ENCODE measurements at regions of chr6 and their contacts with region 1.

Region 1: DNA sequence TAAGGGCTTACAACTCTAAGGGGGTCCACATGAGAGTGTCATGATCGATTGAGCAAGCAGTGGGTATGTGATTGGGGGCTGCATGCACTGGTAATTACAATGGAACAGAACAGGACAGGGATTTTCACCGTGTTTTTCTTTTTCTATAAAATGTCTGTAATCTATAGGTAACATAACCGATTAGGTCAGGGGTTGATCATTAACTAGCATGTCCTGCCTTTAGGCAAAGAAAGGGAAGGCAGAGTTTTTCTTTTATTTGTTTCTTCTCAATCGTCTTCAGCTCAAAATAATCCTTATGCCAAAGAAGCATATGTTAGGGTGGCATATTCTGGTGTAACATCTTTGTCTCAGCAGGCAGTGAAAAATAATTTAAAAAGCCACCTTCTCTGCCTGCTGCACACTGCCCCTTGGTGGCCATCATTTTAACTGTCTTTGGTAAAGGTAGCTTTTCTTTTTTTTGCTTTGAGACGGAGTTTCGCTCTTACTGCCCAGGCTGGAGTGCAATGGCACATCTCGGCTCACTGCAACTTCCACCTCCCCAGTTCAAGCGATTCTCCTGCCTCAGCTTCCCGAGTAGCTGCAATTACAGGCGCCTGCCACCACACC is 9.7 kb upstream of the CEP43 start:
- DNase-seq: peak; percentile 22
- ATAC-seq: peak; percentile 99
- H3K4me3 Mint-ChIP-seq: no peak overlapping the region
- H3K27ac Mint-ChIP-seq: no peak overlapping the region
- H3K4me1 Mint-ChIP-seq: peaks cover 11% of the 10 kb centered on the region
- H3K27me3 Mint-ChIP-seq: no peaks in the 10 kb centered on the region
- CTCF ChIP-seq: peak; percentile 40

Region 2: GRCh38 chr6:166786704-166787293 is 202.7 kb before region 1 on chr6:
- CTCF ChIA-PET with region 1: interaction called, 65 read pairs
- POLR2A ChIA-PET with region 1: no interaction called
- intact Hi-C with region 1: loop called (anchors 1 kb)
- DNase-seq: no peak
- ATAC-seq: peak; percentile 74
- H3K4me3 Mint-ChIP-seq: no peak overlapping the region
- H3K27ac Mint-ChIP-seq: no peak overlapping the region
- H3K4me1 Mint-ChIP-seq: no peaks in the 10 kb centered on the region
- H3K27me3 Mint-ChIP-seq: no peaks in the 10 kb centered on the region
- CTCF ChIP-seq: no peak

Region 3: DNA sequence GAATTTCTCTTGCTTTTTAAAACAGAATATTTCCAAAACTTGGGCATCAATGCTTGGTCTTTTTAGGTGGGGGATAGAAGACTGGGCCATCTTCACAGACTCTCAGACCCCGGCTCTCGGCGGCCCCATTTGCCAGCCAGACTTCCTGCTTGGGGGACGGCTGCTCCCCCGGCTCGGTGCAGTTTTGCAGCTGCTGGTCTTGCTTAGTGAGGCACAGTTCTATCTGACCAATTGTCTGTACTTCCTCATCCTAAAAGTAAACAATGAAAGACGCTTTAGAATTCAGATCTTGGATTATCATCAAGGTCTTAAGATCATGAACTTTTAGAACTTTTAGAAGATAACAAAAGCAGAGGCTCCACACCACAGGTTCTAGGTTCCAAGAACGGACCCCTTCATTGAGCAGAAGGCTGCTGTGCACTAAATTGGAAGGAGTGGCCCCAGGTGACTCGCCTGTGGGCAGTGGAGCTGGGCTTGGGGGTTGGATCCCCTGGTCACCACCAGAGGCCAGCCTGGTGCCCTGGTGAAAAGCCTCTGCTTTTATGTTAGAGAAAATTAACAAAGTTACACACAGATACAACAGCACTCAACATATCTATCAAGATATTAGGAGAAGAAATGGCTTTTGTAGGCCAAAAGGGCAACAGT is 59.9 kb before region 1 on chr6:
- CTCF ChIA-PET with region 1: interaction called, 9 read pairs
- POLR2A ChIA-PET with region 1: interaction called, 4 read pairs
- intact Hi-C with region 1: loop called (anchors 1 kb)
- DNase-seq: no peak
- ATAC-seq: peak; percentile 76
- H3K4me3 Mint-ChIP-seq: peak overlapping the region; percentile 38
- H3K27ac Mint-ChIP-seq: peak overlapping the region; percentile 92
- H3K4me1 Mint-ChIP-seq: peaks cover 37% of the 10 kb centered on the region
- H3K27me3 Mint-ChIP-seq: no peaks in the 10 kb centered on the region
- CTCF ChIP-seq: no peak

Region 4: DNA sequence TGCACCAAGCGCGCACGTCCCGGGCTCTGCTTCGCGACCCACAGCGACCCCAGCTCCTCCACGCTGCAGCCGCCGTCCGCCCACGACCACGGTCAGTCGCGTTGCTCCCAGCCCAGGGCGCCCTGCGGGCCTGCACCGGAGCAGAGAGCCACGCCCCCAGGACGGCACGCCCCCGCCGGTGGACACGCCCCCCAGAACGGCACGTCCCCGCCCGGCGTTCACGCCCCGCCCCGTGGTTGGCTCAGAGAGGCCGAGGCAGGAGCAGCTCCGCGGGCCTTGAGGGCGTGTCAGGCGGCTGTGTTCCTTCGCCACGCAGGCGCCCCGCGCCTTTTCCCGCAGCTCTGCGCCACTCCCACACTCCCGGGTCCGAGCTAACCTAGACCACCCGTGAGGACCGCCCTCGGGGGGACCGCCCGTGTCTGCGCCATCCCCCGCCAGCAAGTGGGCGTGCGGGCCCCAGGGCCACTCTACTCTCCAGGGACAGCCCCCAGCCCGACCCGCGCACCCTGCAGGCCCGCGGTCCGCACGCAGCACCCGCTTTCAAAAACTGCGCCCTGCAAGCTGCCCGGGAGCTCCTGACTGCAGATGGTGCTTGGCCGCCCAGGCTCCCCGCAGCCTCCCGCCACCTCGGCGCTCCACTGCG is 33.0 kb before region 1 on chr6 and contains the start of gene RNASET2:
- CTCF ChIA-PET with region 1: interaction called, 48 read pairs
- POLR2A ChIA-PET with region 1: interaction called, 24 read pairs
- intact Hi-C with region 1: loop called (anchors 1 kb)
- DNase-seq: peak; percentile 100
- ATAC-seq: peak; percentile 82
- H3K4me3 Mint-ChIP-seq: peak within 1 kb of the TSS; percentile 91
- H3K27ac Mint-ChIP-seq: peak within 1 kb of the TSS; percentile 100
- H3K4me1 Mint-ChIP-seq: peaks cover 76% of the 10 kb centered on the region
- H3K27me3 Mint-ChIP-seq: no peaks in the 10 kb centered on the region
- CTCF ChIP-seq: no peak
- total RNA-seq, gene RNASET2: 118 and 135 TPM in 2 replicates

Region 5: GRCh38 chr6:167079853-167080297 is 90.3 kb after region 1 on chr6:
- CTCF ChIA-PET with region 1: no interaction called
- POLR2A ChIA-PET with region 1: no interaction called
- intact Hi-C with region 1: no loop called
- DNase-seq: peak; percentile 65
- ATAC-seq: peak; percentile 99
- H3K4me3 Mint-ChIP-seq: peak overlapping the region; percentile 54
- H3K27ac Mint-ChIP-seq: peak overlapping the region; percentile 91
- H3K4me1 Mint-ChIP-seq: peaks cover 52% of the 10 kb centered on the region
- H3K27me3 Mint-ChIP-seq: no peaks in the 10 kb centered on the region
- CTCF ChIP-seq: peak; percentile 51